Panc1 (cell line): ENCODE measurements at regions of chr10 and their contacts with region 1.

Region 1: GRCh38 chr10:118383699-118384098 is 41.6 kb upstream of the FAM204A start:
- DNase-seq: no peak
- ATAC-seq: no peak
- H3K4me3 ChIP-seq: no peak overlapping the region
- H3K27ac ChIP-seq: no peak overlapping the region
- H3K4me1 ChIP-seq: no peaks in the 10 kb centered on the region
- H3K27me3 ChIP-seq: peaks cover 10% of the 10 kb centered on the region
- CTCF ChIP-seq: no peak

Region 2: DNA sequence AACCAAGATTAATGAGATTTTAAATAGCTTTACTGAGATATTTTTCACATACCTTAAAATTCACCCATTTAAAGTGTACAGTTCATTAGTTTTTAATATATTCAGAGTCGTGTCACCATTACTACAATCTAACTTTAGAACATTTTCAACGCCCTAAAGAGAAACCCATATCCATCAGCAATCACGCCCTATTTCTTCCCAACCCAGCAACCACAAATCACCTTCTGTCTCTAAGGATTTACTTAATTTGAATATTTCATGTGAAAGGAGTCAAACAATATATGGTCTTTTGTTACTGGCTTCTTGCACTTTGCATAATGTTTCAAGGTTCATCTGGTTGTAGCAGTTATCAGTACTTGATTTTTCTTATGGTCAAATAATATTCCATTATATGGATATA is 983.4 kb before region 1 on chr10:
- CTCF ChIA-PET with region 1: no interaction called
- POLR2A ChIA-PET with region 1: interaction called, 14 read pairs
- in situ Hi-C with region 1: no loop called
- intact Hi-C with region 1: no loop called
- DNase-seq: no peak
- ATAC-seq: no peak
- H3K4me3 ChIP-seq: no peak overlapping the region
- H3K27ac ChIP-seq: no peak overlapping the region
- H3K4me1 ChIP-seq: no peaks in the 10 kb centered on the region
- H3K27me3 ChIP-seq: peaks cover 3% of the 10 kb centered on the region; the same call in 1 of the 2 replicates
- CTCF ChIP-seq: no peak

Region 3: DNA sequence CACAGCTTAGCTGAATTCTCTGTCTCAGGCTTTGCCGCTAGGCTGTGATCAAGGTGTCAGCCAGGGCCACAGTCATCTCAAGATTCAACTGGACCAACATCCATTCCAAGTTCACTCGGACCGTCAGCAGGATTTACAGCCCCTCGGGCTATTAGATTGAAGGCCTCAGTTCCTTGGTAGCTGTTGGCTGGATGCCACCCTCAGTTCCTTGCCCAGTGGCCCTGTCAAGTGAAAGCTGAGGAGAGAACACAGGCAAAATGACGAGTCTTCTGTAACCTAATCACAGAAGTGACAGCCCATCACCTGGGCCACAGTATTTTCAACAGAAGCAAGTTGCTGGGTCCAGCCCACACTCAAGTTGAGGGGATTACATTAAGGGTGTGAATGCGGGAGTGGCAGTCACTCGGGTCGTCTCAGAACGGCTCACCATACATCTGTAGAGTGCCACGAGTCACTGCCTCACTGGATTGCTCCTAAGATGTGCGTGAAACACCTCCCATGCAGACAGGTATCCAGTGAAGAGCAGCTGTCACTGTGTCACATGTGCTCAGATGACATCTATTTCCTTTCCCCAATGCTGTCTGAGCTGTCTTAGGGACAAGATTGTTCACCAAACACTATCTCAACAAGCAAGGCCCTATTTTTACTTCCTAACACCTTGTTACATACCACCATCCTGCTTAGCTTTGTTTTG is 290.7 kb after region 1 on chr10:
- CTCF ChIA-PET with region 1: no interaction called
- POLR2A ChIA-PET with region 1: no interaction called
- in situ Hi-C with region 1: no loop called
- intact Hi-C with region 1: no loop called
- DNase-seq: no peak
- ATAC-seq: no peak; the same call in 1 of the 2 replicates
- H3K4me3 ChIP-seq: no peak overlapping the region
- H3K27ac ChIP-seq: no peak overlapping the region
- H3K4me1 ChIP-seq: no peaks in the 10 kb centered on the region
- H3K27me3 ChIP-seq: no peaks in the 10 kb centered on the region
- CTCF ChIP-seq: no peak

Region 4: GRCh38 chr10:118832241-118832651 is 448.5 kb after region 1 on chr10:
- CTCF ChIA-PET with region 1: no interaction called
- POLR2A ChIA-PET with region 1: interaction called, 16 read pairs
- in situ Hi-C with region 1: no loop called
- intact Hi-C with region 1: no loop called
- DNase-seq: no peak
- ATAC-seq: no peak
- H3K4me3 ChIP-seq: no peak overlapping the region
- H3K27ac ChIP-seq: no peak overlapping the region
- H3K4me1 ChIP-seq: no peaks in the 10 kb centered on the region
- H3K27me3 ChIP-seq: no peaks in the 10 kb centered on the region
- CTCF ChIP-seq: no peak